ENCODE measurements at regions of chr1 and their contacts with region 1.

Region 1: DNA sequence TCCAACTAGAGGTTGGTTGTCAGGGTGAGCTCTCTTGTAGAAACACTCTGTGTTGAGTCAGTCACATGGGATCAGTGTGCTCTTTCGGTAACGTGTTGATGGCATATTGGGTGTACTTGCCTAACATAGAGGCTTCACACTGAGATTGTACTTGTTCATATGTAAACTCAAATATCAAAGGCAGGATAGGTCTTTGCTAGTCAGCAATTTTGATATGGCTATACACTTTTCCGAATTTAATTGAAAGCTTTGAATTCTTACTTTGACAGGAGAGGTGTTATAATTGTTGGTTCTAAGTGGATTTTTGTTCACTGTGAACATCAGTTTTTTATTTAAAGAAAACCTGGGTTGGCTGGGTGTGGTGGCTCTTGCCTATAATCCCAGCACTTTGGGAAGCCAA is 16.4 kb upstream of the TGFB2 start:
- DNase-seq: no peak
- ATAC-seq: no peak
- H3K4me3 ChIP-seq: no peak overlapping the region
- H3K27ac ChIP-seq: no peak overlapping the region
- H3K4me1 ChIP-seq: no peaks in the 10 kb centered on the region
- H3K27me3 ChIP-seq: no peaks in the 10 kb centered on the region

Region 2: GRCh38 chr1:218299416-218299815 is 29.4 kb before region 1 on chr1:
- intact Hi-C with region 1: no loop called
- DNase-seq: no peak
- ATAC-seq: no peak
- H3K4me3 ChIP-seq: no peak overlapping the region
- H3K27ac ChIP-seq: no peak overlapping the region
- H3K4me1 ChIP-seq: no peaks in the 10 kb centered on the region
- H3K27me3 ChIP-seq: no peaks in the 10 kb centered on the region

Region 3: DNA sequence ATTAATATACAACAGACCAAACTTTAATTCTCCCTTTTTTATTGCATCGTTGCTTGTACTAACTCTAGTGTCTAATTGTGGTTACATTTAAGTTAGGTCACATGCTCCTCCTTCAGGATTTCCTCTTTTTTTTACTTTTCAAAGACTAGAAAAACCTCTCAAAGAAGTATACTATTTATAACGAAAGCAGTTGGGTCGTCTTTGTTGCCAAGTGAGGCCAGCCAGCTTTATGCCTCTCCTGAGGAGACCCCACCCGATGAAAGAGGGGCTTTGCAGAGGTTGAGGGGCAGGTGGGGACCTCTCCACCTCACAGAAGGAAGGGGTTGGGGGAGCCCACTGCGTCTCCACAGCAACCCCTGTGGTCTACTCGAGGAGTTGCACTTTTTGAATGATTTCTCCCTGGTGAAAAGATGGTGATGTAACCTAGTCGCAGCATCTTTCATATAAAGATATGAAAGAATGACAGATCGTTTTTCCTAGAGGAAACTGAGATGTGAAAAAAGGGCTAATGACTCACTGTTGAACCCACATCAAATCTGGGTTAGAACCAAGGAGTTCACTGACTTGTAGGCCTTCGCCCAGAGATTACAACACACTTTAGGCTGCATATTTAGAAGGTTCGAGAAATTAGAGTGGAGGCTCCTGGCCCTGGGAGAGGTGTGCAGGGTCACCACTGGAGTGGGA is 22.8 kb after region 1 on chr1:
- intact Hi-C with region 1: no loop called
- DNase-seq: peak; percentile 60 to 75
- ATAC-seq: peak; percentile 72
- H3K4me3 ChIP-seq: peak overlapping the region; percentile 30 to 43
- H3K27ac ChIP-seq: peak overlapping the region in 1 of 2 donors; percentile 30
- H3K4me1 ChIP-seq: no peaks in the 10 kb centered on the region
- H3K27me3 ChIP-seq: no peaks in the 10 kb centered on the region

Region 4: GRCh38 chr1:219566951-219567947 is 1238.5 kb after region 1 on chr1:
- intact Hi-C with region 1: loop called (anchors 5 to 10 kb)
- DNase-seq: no peak
- ATAC-seq: no peak
- H3K4me3 ChIP-seq: no peak overlapping the region
- H3K27ac ChIP-seq: no peak overlapping the region
- H3K4me1 ChIP-seq: no peaks in the 10 kb centered on the region
- H3K27me3 ChIP-seq: no peaks in the 10 kb centered on the region

Measured in aorta (tissue), 5 donors.